H1 (cell line): ENCODE measurements at regions of chr12 and their contacts with region 1.

Region 1: DNA sequence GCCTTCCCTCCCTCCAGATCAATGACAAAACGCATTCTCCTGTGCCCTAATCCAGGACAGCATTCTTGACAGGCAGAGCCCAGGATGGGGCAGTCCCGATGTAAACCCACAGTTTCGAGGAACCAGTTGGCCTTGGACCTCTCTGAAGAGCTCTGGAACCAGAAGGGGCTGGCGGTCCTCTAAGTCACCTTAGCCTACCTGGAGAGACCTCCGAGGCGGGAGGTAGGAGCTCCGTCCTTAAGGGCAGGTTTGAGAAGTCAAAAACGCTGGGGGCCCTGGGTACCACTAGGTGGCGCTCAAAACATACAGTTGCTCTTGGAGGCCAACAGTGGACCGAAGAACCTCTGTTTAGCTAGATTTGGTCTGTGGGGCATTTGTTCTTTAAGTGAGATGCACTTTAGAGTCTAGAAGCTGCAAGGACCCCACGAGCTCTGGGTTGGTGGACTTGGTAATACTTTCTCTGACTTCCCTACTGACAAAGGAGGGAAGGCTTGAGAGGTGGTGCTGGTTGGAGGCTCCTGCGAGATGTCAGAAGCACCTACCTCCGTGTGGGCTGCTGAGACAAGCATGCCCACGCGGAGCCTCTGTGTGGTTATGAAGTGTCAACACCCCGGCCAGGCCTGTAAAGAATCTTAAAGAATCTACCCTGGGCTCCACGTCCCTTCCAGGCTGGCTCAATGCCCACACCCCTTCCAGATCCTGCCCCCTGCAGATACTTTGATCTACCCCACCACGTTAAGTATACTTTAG is 74.8 kb upstream of the CHST11 start:
- DNase-seq: peak; percentile 71 to 93
- H3K4me3 ChIP-seq: 0 out of 8 replicates have a peak overlapping the region, but pooled peaks of 1 of the 4 experiments have one; percentile 28
- H3K27ac ChIP-seq: no peak overlapping the region
- H3K4me1 ChIP-seq: peaks cover 0 to 4% (median 3%) of the 10 kb centered on the region in 4 experiments; a peak in 4 of 7 replicates
- H3K27me3 ChIP-seq: no peaks in the 10 kb centered on the region
- CTCF ChIP-seq: peak; percentile 68 to 92 (median 92)
- EP300 ChIP-seq: peak in 1 of 2 experiments; percentile 18; a peak in 1 of 3 replicates
- POLR2A ChIP-seq: no peak
- RAD21 ChIP-seq: peak; percentile 98 to 99

Region 2: GRCh38 chr12:104352106-104352713 is 29.7 kb before region 1 on chr12:
- CTCF ChIA-PET with region 1: no interaction called
- POLR2A ChIA-PET with region 1: no interaction called
- DNase-seq: peak in 1 of 2 experiments; percentile 29
- H3K4me3 ChIP-seq: no peak overlapping the region
- H3K27ac ChIP-seq: no peak overlapping the region
- H3K4me1 ChIP-seq: peaks cover 0 to 8% (median 6%) of the 10 kb centered on the region in 4 experiments; a peak in 5 of 7 replicates
- H3K27me3 ChIP-seq: no peaks in the 10 kb centered on the region
- CTCF ChIP-seq: no peak
- EP300 ChIP-seq: no peak
- POLR2A ChIP-seq: no peak
- RAD21 ChIP-seq: no peak

Region 3: GRCh38 chr12:104407438-104407837 is 25.5 kb after region 1 on chr12:
- CTCF ChIA-PET with region 1: interaction called, 11 read pairs
- POLR2A ChIA-PET with region 1: no interaction called
- DNase-seq: no peak
- H3K4me3 ChIP-seq: no peak overlapping the region
- H3K27ac ChIP-seq: no peak overlapping the region
- H3K4me1 ChIP-seq: peaks cover 0 to 5% (median 1%) of the 10 kb centered on the region in 4 experiments; a peak in 5 of 7 replicates
- H3K27me3 ChIP-seq: no peaks in the 10 kb centered on the region; a peak in 1 of 7 replicates
- CTCF ChIP-seq: no peak
- EP300 ChIP-seq: no peak
- POLR2A ChIP-seq: no peak
- RAD21 ChIP-seq: no peak

Region 4: DNA sequence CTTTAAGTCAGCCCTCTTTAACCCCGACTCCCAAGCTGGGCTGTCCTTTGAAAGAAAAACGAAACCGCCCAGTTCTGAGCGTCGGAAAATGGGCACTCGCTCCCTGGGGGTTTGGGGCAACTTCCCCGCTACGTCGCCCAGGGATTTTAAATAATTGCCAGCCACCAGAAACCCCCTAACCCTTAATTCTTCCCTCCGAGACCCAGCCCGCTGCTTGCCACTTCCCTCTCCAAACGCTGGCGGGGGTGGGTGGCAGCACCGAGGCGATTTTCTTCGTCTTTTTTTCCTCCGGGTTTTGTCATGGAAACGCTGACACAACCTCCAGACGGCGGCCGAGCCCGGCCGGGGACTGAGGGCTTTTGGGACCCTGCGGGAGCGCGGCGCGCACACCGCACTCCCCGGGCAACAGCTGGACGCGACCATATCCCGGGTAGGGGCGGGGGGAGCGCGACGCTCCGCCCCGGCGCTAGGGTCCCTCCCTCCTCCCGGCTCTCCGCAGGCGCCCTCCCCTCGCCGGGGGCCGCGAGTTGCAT is 74.6 kb after region 1 on chr12 and contains the start of gene CHST11:
- CTCF ChIA-PET with region 1: interaction called, 20 read pairs
- POLR2A ChIA-PET with region 1: interaction called, 4 read pairs
- DNase-seq: peak; percentile 71 to 90
- H3K4me3 ChIP-seq: peak within 1 kb of the TSS; percentile 61 to 98 (median 84)
- H3K27ac ChIP-seq: no peak within 1 kb of the TSS
- H3K4me1 ChIP-seq: peaks cover 9 to 17% (median 12%) of the 10 kb centered on the region in 4 experiments; a peak in 6 of 7 replicates
- H3K27me3 ChIP-seq: peaks cover 0 to 31% (median 18%) of the 10 kb centered on the region in 4 experiments; a peak in 6 of 7 replicates
- CTCF ChIP-seq: peak in 2 of 3 experiments; percentile 21 to 28; a peak in 3 of 4 replicates
- EP300 ChIP-seq: peak in 1 of 2 experiments; percentile 95; a peak in 1 of 3 replicates
- POLR2A ChIP-seq: no peak
- RAD21 ChIP-seq: peak; percentile 38 to 48
- total RNA-seq, gene CHST11: 14.4 and 15.5 TPM in 2 replicates

Region 5: DNA sequence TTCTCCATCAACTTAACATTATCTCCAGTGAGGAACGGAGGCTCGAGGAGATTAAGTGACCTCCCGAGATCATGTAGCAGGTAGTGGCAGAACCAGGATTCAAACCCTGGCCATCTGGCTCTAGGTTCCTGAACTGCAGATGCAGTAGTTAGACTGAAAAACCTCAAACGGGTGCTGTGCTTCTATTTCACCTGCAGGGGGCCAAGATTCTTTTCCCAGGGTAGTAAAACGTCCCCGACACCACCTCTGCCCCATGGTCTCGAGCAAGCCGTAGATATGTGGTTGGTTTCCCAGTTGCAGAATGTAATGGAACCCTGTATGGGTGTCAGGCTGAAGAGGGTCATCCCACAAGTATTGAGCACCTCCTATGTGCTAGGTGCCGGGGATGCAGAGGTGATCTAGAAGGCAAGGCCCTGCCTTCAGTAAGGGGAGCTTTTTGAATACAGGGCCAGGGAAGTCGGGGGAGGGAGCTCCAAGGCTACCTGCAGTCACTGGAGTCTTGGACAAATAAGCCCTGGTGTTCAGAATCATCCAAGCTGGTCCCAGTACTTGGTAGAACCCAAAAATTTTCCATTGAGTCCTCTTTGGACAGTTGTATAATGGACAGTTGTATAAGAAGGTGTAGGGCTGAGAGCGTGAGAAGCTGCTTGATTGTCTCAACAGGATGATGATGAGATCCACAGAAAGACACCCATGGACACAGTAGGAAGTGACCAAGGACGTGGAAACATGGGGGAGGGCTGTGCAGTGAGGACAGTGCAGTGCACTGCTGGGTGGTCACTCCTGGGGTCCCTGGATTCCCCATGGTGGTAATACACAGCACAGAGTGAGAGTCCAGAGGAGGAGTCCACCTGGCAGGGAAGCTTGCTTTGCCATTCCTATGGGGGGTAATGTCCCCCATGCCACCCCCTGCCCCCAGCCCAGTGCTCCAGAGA is 272.1 kb after region 1 on chr12:
- CTCF ChIA-PET with region 1: interaction called, 12 read pairs
- POLR2A ChIA-PET with region 1: no interaction called
- DNase-seq: peak in 1 of 2 experiments; percentile 72
- H3K4me3 ChIP-seq: no peak overlapping the region
- H3K27ac ChIP-seq: no peak overlapping the region
- H3K4me1 ChIP-seq: peaks cover 1 to 16% (median 12%) of the 10 kb centered on the region in 4 experiments; a peak in 5 of 7 replicates
- H3K27me3 ChIP-seq: no peaks in the 10 kb centered on the region
- CTCF ChIP-seq: peak; percentile 47 to 77 (median 77)
- EP300 ChIP-seq: no peak
- POLR2A ChIP-seq: no peak
- RAD21 ChIP-seq: peak; percentile 36 to 66

Region 6: DNA sequence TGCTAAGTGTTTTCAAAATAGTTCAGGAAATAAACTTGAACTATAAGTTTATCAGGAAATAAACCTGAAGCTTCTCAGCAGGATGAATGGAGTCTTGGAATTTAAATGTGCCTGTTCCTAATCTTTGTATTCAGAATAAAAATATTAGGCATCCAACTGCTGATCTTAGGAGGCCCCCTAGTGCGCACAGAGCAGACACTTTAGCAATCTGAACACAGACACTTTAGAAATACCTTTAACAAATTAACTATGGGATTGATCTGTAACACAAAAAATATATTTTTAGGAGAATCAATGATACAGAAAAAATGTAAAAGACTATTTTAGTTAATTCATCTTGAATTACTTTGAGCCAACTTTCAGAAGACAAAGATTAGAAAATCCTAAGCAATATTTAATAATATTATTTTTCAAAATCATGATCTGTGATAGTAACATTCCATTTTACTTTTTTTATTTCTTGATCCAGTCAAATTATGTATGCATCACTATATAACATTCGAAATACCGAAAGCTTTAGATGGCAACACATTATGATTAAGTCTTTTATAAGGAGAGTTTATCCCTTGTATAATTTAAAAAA is 495.3 kb after region 1 on chr12:
- CTCF ChIA-PET with region 1: interaction called, 11 read pairs
- POLR2A ChIA-PET with region 1: no interaction called
- DNase-seq: no peak
- H3K4me3 ChIP-seq: no peak overlapping the region
- H3K27ac ChIP-seq: no peak overlapping the region
- H3K4me1 ChIP-seq: no peaks in the 10 kb centered on the region
- H3K27me3 ChIP-seq: no peaks in the 10 kb centered on the region
- CTCF ChIP-seq: peak in 2 of 3 experiments; percentile 24 to 28; a peak in 2 of 4 replicates
- EP300 ChIP-seq: no peak
- POLR2A ChIP-seq: no peak
- RAD21 ChIP-seq: peak; percentile 74 to 76